Activated T-helper 2 cell treated with anti-CD3 and anti-CD28 coated beads, Interferon-gamma antibody, Interleukin-2, Interleukin-4, amounts not matched to agents 10 μg/mL and 5 μg/mL and 100 μg/mL, durations not matched to agents 14 hours and 24 hours and 36 hours (primary cell): ENCODE measurements at regions of chr2 and their contacts with region 1.

Region 1: DNA sequence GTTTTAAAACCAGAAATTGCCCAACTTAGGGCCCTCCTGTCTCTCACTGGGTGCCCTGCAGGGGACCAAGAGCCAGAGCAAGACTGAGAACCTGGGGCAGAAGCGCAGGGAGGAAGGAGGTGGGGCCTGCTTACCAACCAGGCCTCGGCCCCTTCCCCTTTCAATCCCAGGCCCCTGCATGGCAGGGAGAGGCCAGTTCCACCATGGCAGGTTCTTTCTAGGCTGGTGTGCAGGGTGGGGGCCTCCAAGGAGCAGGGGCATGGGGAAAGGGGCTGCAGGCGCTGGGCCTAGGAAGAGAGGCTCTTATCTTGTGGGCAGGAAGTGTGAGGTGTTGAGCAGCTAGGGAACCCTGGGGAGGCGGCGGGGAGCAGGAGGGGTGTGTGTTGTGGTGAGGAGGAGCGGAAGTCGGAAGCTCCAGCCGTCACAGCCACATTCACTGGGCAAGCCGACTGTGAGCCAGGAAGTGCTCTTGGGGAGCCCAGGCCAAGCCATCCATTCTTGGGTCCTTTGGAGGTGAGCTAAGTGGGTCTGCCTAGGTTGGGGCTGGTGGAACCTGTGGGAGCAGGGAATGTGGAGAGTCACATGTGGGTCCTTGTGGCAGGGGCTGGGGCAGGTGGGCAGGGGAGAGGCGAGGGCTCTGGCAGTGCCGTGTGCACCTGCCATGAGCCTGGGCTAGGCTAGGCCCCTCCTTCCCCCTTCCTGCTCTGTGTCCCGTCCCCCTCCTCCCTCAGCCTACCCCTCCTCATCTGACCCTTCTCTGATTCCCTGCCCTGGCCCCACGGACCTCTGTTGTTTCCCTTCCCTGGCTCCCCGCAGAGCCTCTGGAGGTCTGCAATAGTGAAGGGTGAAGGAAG is at the start of gene PSD4:
- DNase-seq: peak; percentile 90
- H3K4me3 Mint-ChIP-seq: peak within 1 kb of the TSS; percentile 89
- H3K27ac Mint-ChIP-seq: peak within 1 kb of the TSS; percentile 94
- H3K4me1 Mint-ChIP-seq: peaks cover 65% of the 10 kb centered on the region
- H3K27me3 Mint-ChIP-seq: no peaks in the 10 kb centered on the region
- total RNA-seq, gene PSD4: 313 and 319 TPM in 2 replicates

Region 2: GRCh38 chr2:112474844-112475486 is 698.8 kb before region 1 on chr2:
- intact Hi-C with region 1: no loop called
- DNase-seq: no peak
- H3K4me3 Mint-ChIP-seq: no peak overlapping the region
- H3K27ac Mint-ChIP-seq: no peak overlapping the region
- H3K4me1 Mint-ChIP-seq: no peaks in the 10 kb centered on the region
- H3K27me3 Mint-ChIP-seq: no peaks in the 10 kb centered on the region

Region 3: GRCh38 chr2:112645310-112646101 is 528.3 kb before region 1 on chr2 and contains the start of gene SLC20A1:
- intact Hi-C with region 1: loop called (anchors 5 kb)
- DNase-seq: peak; percentile 98
- H3K4me3 Mint-ChIP-seq: peak within 1 kb of the TSS; percentile 97
- H3K27ac Mint-ChIP-seq: peak within 1 kb of the TSS; percentile 77
- H3K4me1 Mint-ChIP-seq: peaks cover 68% of the 10 kb centered on the region
- H3K27me3 Mint-ChIP-seq: no peaks in the 10 kb centered on the region
- total RNA-seq, gene SLC20A1: 128 TPM in 2 replicates

Region 4: GRCh38 chr2:112910219-112910618 is 263.6 kb before region 1 on chr2:
- intact Hi-C with region 1: no loop called
- DNase-seq: no peak
- H3K4me3 Mint-ChIP-seq: no peak overlapping the region
- H3K27ac Mint-ChIP-seq: no peak overlapping the region
- H3K4me1 Mint-ChIP-seq: peaks cover 3% of the 10 kb centered on the region
- H3K27me3 Mint-ChIP-seq: peaks cover 4% of the 10 kb centered on the region

Region 5: GRCh38 chr2:112985090-112985489 is 188.7 kb before region 1 on chr2:
- intact Hi-C with region 1: loop called (anchors 10 kb)
- DNase-seq: peak; percentile 41
- H3K4me3 Mint-ChIP-seq: no peak overlapping the region
- H3K27ac Mint-ChIP-seq: peak overlapping the region; percentile 60
- H3K4me1 Mint-ChIP-seq: peaks cover 25% of the 10 kb centered on the region
- H3K27me3 Mint-ChIP-seq: no peaks in the 10 kb centered on the region

Region 6: GRCh38 chr2:113138428-113139322 is 35.1 kb before region 1 on chr2:
- intact Hi-C with region 1: loop called (anchors 2 kb)
- DNase-seq: peak; percentile 50
- H3K4me3 Mint-ChIP-seq: no peak overlapping the region
- H3K27ac Mint-ChIP-seq: no peak overlapping the region
- H3K4me1 Mint-ChIP-seq: peaks cover 35% of the 10 kb centered on the region
- H3K27me3 Mint-ChIP-seq: peaks cover 3% of the 10 kb centered on the region

Region 7: GRCh38 chr2:113157118-113157896 is 16.5 kb before region 1 on chr2:
- intact Hi-C with region 1: loop called (anchors 2 kb)
- DNase-seq: no peak
- H3K4me3 Mint-ChIP-seq: peak overlapping the region; percentile 84
- H3K27ac Mint-ChIP-seq: peak overlapping the region; percentile 38
- H3K4me1 Mint-ChIP-seq: peaks cover 19% of the 10 kb centered on the region
- H3K27me3 Mint-ChIP-seq: peaks cover 12% of the 10 kb centered on the region

Region 8: DNA sequence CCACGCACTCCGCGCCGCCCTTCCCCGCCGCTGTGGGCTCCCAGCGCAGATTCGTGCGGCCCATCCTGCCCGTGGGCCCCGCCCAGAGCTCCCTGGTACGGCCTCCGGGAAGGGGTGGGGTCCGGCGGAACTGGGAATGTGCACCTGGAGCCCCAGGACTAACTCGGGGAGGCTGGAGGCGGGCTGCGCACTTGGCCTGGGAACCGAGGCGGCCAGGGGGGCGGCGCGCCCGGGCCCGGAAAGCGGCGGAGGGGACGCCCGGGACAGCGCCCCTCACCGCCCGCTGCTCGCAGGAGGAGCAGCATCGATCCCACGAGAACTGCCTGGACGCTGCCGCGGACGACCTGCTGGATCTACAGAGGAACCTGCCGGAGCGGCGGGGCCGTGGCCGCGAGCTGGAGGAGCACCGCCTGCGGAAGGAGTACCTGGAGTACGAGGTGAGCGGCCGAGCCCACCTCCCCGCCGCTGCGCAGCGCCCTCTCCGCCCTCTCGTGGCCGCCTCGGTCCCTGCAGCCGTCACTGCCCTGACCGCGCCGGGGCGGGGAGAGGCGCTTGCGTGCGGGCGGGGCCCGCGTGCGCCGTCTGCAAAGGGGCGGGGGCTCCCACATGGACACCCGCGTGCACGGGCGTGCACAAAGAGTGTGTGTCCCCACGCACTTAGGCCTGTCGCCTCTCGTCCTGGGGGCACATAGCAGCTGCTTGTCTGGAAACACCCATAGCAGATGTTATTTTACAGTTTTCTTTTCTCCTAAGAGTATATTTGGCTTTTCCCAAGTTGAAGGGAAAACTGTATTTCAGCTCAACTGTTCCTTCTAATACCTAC is 25.2 kb after region 1 on chr2:
- intact Hi-C with region 1: loop called (anchors 2 kb)
- DNase-seq: peak; percentile 70
- H3K4me3 Mint-ChIP-seq: no peak overlapping the region
- H3K27ac Mint-ChIP-seq: no peak overlapping the region
- H3K4me1 Mint-ChIP-seq: peaks cover 29% of the 10 kb centered on the region
- H3K27me3 Mint-ChIP-seq: no peaks in the 10 kb centered on the region